ENCODE measurements at regions of chr16 and their contacts with region 1.

Region 1: GRCh38 chr16:16042076-16042475 is 92.7 kb downstream of the ABCC1 start:
- DNase-seq: peak in 2 of 3 donors; percentile 60 to 79
- H3K4me3 ChIP-seq: no peak overlapping the region
- H3K27ac ChIP-seq: peak overlapping the region in 1 of 2 experiments; percentile 18
- H3K4me1 ChIP-seq: peaks cover 0 to 32% (median 18%) of the 10 kb centered on the region in 4 experiments
- H3K27me3 ChIP-seq: no peaks in the 10 kb centered on the region

Region 2: DNA sequence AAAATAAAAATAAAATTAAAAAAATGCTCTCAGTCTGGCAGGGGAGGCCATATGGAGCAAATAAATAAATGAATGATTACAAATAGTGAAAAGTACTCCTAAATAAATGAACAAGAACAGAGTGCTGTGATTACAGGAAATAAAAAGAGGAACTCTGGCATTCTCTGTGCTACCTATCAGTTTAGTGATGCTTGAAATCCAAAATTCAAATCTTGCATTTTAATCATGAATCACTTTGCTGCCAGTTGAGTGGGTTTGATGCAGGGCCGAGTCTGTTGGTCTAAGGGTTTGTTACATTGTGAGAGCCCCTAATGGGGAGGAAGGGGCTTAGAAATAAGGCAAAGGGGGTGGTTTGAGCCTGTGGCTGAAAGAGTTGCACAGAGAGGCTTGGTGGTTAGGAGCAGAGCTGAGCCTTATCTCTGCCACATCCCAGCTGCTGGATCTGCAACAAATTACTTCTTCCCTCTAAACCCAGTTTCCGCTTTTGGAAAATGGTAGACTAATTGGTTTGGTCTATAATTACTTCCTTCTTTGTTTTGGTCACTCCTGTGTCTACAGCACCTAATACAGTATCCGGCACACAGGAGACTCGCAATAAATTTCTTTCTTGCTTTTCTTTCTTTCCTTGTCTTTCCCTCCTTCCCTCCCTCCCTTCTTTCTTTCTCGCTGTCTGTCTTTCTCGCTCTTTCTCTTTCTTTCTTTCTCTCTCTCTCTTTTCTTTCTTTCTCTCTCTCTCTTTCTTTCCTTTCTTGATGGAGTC is 99.0 kb before region 1 on chr16:
- CTCF ChIA-PET with region 1: no interaction called
- POLR2A ChIA-PET with region 1: no interaction called
- DNase-seq: peak; percentile 30 to 78 (median 72)
- H3K4me3 ChIP-seq: peak overlapping the region in 3 of 7 experiments; percentile 1 to 28 (median 5)
- H3K27ac ChIP-seq: no peak overlapping the region
- H3K4me1 ChIP-seq: peaks cover 7 to 17% (median 8%) of the 10 kb centered on the region in 4 experiments
- H3K27me3 ChIP-seq: no peaks in the 10 kb centered on the region

Region 3: DNA sequence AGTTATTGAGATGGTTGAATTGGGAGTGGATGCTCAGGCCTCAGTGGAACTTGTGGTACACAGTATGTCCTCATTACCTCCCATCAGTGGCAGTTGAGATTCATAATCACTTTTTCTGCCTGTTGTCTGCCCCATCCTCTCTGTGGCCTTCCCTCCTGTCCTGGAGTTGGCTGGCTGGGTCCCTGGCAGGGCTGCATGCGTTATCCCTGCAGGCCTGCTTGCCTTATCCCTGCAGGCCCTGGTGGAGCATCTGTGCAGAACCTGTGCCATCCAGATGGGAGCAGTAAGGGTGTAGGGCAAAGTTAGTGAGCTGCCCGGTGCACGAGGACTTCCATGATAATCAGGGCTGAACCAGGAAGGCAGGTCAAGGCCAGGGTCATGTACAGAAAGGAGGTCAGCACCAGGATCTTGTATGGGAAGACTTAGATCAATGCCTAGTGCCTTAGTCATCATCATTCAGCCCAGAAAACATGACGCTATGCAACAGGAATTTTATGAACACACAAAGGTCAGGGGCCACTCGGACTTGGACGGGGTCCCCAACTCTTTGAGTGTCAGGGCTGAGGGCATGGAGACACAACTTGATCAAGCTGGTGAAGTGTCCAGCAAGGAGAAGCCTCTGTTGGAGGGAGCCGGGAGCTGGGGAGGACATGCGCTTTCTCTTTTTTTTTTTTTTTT is 45.5 kb before region 1 on chr16:
- CTCF ChIA-PET with region 1: no interaction called
- POLR2A ChIA-PET with region 1: no interaction called
- DNase-seq: no peak
- H3K4me3 ChIP-seq: no peak overlapping the region
- H3K27ac ChIP-seq: peak overlapping the region in 1 of 2 experiments; percentile 92
- H3K4me1 ChIP-seq: peaks cover 4 to 58% (median 49%) of the 10 kb centered on the region in 4 experiments
- H3K27me3 ChIP-seq: no peaks in the 10 kb centered on the region

Region 4: DNA sequence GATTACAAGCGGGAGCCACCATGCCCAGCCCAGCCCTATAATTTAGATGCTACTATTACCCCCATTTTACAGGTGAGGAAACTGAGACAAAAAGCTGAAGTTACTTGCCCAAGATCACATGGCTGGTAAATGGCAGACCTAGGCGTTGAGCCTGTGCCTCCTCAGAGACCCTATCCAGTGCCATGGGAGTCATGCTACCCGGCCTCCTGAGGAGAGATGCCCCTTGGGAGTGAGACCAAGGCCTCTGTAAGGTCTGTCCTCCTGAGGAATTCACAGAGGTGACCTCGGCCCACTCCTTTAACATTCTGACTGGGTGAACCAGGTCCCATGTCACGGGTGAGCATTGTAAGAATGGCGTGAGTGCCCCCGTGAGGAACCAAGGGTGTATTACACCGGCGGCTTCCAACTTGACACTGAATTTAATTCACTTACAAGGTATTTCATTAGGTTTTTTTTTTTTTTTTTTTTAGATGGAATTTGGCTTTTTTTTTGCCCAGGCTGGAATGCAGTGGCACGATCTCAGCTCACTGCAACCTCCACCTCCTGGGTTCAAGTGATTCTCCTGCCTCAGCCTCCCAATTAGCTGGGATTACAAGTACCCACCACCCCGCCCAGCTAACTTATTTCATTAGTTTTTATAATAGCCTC is 85.5 kb after region 1 on chr16:
- CTCF ChIA-PET with region 1: interaction called, 16 read pairs
- POLR2A ChIA-PET with region 1: no interaction called
- DNase-seq: peak; percentile 85 to 93 (median 91)
- H3K4me3 ChIP-seq: no peak overlapping the region
- H3K27ac ChIP-seq: peak overlapping the region; percentile 38 to 71
- H3K4me1 ChIP-seq: peaks cover 0 to 20% (median 9%) of the 10 kb centered on the region in 4 experiments
- H3K27me3 ChIP-seq: no peaks in the 10 kb centered on the region

Measured in common myeloid progenitor, CD34-positive (primary cell).